ENCODE measurements at regions of chr2 and their contacts with region 1.

Region 1: DNA sequence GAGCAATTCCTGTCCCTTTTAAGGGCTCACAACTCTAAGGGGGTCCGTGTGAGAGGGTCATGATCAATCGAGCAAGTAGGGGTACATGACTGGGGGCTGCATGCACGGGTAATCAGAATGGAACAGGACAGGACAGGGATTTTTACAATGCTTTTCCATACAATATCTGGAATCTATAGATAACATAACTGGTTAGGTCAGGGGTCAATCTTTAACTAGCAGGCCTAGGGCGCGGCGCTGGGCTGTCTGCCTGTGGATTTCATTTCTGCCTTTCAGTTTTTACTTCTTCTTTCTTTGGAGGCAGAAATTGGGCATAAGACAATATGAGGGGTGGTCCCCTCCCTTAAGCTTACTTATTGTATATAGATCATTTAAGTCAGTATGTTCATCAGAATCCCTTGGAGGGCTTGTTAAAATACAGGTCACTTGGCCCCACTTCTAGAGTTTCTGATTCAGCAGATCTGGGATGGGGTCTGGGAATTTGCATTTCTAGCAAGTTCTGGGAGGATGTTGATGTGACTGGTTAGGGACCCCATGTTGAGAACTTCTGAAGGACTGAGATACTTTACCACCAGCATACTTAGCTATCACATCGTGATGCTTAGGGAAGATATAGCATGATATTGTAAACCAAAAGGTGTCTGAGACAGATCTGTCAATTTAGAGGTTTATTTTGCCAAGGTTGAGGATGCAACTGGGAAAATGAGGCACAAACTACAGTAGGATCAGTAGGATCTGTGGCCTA is 2.8 kb upstream of the INPP4A start:
- DNase-seq: no peak
- H3K4me3 ChIP-seq: no peak overlapping the region
- H3K27ac ChIP-seq: no peak overlapping the region
- H3K4me1 ChIP-seq: no peaks in the 10 kb centered on the region
- H3K27me3 ChIP-seq: no peaks in the 10 kb centered on the region
- CTCF ChIP-seq: no peak
- POLR2A ChIP-seq: no peak

Region 2: GRCh38 chr2:98502556-98503335 is 60.9 kb after region 1 on chr2:
- intact Hi-C with region 1: loop called (anchors 2 kb)
- DNase-seq: no peak
- H3K4me3 ChIP-seq: no peak overlapping the region
- H3K27ac ChIP-seq: peak overlapping the region; percentile 64 to 71
- H3K4me1 ChIP-seq: peaks cover 0 to 9% of the 10 kb centered on the region in 2 donors
- H3K27me3 ChIP-seq: no peaks in the 10 kb centered on the region
- CTCF ChIP-seq: no peak
- POLR2A ChIP-seq: no peak